Body of pancreas (tissue), 4 donors: ENCODE measurements at regions of chr2 and their contacts with region 1.

Region 1: GRCh38 chr2:38720613-38721241 is 30.4 kb downstream of the SRSF7 start:
- DNase-seq: peak; percentile 66 to 82 (median 78)
- ATAC-seq: peak; percentile 85
- H3K4me3 ChIP-seq: no peak overlapping the region
- H3K27ac ChIP-seq: peak overlapping the region in 1 of 4 donors; percentile 31
- H3K4me1 ChIP-seq: peaks cover 40% of the 10 kb centered on the region
- H3K27me3 ChIP-seq: no peaks in the 10 kb centered on the region
- CTCF ChIP-seq: no peak
- POLR2A ChIP-seq: no peak

Region 2: GRCh38 chr2:38581193-38582147 is 139.3 kb before region 1 on chr2:
- intact Hi-C with region 1: loop called (anchors 10 kb)
- DNase-seq: peak in 3 of 4 donors; percentile 40 to 47 (median 46)
- ATAC-seq: peak; percentile 84
- H3K4me3 ChIP-seq: no peak overlapping the region
- H3K27ac ChIP-seq: no peak overlapping the region
- H3K4me1 ChIP-seq: peaks cover 6% of the 10 kb centered on the region
- H3K27me3 ChIP-seq: no peaks in the 10 kb centered on the region
- CTCF ChIP-seq: peak in 6 of 7 experiments; percentile 59 to 79 (median 72)
- POLR2A ChIP-seq: no peak